ENCODE measurements at regions of chr6 and their contacts with region 1.

Region 1: GRCh38 chr6:79570129-79571029 is 33.1 kb upstream of the LCA5 start:
- DNase-seq: peak; percentile 76
- ATAC-seq: peak; percentile 86
- H3K4me3 ChIP-seq: peak overlapping the region; percentile 52
- H3K27ac ChIP-seq: peak overlapping the region; percentile 28
- H3K4me1 ChIP-seq: peaks cover 32% of the 10 kb centered on the region
- H3K27me3 ChIP-seq: no peaks in the 10 kb centered on the region
- CTCF ChIP-seq: peak; percentile 74

Region 2: DNA sequence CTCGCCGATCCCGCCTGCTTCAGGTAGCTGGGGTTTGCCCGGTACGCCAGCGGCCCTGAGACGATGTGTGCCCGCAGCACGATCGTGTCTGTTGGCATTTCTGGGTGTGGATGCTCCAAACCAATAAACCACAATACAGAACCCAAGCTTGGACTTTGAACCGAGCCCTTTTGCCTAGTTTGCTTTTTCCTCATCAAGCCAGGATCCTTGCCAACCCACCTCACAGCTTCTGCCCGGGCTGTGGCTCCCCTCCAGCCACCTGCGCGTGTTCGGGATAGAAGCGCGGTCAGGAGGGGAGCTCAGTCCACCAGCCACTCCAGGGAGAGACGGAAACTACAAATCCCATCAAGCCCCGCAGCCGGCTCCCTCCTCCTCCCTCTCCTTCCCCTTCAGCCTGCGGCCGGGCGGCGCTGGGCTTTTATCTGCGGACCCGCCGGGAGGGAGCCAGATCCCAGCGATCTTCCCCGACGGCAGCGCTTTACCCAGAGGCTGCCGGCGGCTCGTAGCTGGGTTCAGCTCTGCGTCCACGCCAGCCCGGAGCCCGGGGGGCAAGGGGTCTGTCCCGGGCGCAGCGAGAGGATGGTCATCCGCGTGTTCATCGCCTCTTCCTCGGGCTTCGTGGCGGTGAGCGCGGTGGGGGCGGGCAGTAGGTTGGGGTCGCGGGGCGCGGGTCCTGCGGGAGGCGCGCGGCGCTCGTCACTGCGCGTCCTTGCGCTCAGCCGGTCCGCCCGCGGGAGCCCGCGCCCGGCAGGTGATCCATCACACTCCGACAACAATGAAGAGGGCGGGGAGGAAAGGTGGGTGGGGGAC is 60.7 kb after region 1 on chr6 and contains the start of gene SH3BGRL2:
- CTCF ChIA-PET with region 1: interaction called, 6 read pairs
- POLR2A ChIA-PET with region 1: no interaction called
- intact Hi-C with region 1: loop called (anchors 2 kb)
- DNase-seq: peak; percentile 63
- ATAC-seq: peak; percentile 79
- H3K4me3 ChIP-seq: peak within 1 kb of the TSS; percentile 94
- H3K27ac ChIP-seq: no peak within 1 kb of the TSS
- H3K4me1 ChIP-seq: peaks cover 26% of the 10 kb centered on the region
- H3K27me3 ChIP-seq: no peaks in the 10 kb centered on the region
- CTCF ChIP-seq: no peak
- total RNA-seq, gene SH3BGRL2: 3.7 and 3.8 TPM in 2 replicates

Region 3: GRCh38 chr6:79672631-79673111 is 102.3 kb after region 1 on chr6:
- CTCF ChIA-PET with region 1: interaction called, 13 read pairs
- POLR2A ChIA-PET with region 1: no interaction called
- intact Hi-C with region 1: loop called (anchors 1 kb)
- DNase-seq: peak; percentile 65
- ATAC-seq: peak; percentile 41
- H3K4me3 ChIP-seq: no peak overlapping the region
- H3K27ac ChIP-seq: peak overlapping the region; percentile 70; the same call in 1 of the 2 replicates
- H3K4me1 ChIP-seq: peaks cover 23% of the 10 kb centered on the region
- H3K27me3 ChIP-seq: no peaks in the 10 kb centered on the region
- CTCF ChIP-seq: peak; percentile 81

Region 4: DNA sequence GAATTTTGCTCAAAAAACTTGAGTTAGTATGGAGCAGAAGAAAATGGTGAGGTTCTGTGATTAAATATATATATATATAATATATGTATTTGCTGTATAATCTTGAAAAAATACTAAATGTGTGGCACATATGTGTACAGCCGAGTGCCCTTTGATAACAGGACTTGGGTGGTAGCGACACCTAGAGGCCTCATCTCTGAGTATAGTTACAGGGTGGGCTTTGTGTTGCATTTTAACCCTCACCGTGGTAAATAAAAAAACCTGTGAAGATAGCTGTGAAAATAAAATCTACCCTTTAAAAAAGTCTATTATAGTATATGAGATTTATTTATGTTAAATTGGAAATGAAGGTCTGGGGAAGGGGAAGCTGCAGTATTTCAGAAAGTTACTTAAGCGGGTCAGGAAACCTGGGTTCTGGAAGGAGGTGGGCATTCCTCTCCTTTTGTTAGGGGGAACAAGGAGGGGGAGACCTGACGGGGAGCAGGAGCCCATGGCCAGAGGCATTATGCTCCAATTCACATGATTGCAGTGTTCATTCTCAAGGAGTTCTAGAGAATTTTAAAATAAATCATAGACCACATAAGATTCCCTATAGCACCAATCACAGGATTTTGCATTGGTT is 143.4 kb after region 1 on chr6:
- CTCF ChIA-PET with region 1: no interaction called
- POLR2A ChIA-PET with region 1: no interaction called
- intact Hi-C with region 1: loop called (anchors 1 kb)
- DNase-seq: peak; percentile 64
- ATAC-seq: peak; percentile 74; the same call in 1 of the 2 replicates
- H3K4me3 ChIP-seq: no peak overlapping the region
- H3K27ac ChIP-seq: no peak overlapping the region
- H3K4me1 ChIP-seq: no peaks in the 10 kb centered on the region
- H3K27me3 ChIP-seq: no peaks in the 10 kb centered on the region
- CTCF ChIP-seq: peak; percentile 66

Region 5: GRCh38 chr6:79813854-79814709 is 243.7 kb after region 1 on chr6:
- CTCF ChIA-PET with region 1: no interaction called
- POLR2A ChIA-PET with region 1: no interaction called
- intact Hi-C with region 1: loop called (anchors 5 kb)
- DNase-seq: peak; percentile 71
- ATAC-seq: peak; percentile 74
- H3K4me3 ChIP-seq: no peak overlapping the region
- H3K27ac ChIP-seq: no peak overlapping the region
- H3K4me1 ChIP-seq: no peaks in the 10 kb centered on the region
- H3K27me3 ChIP-seq: 0 out of 2 replicates have a peak, but pooled peaks cover 7% of the 10 kb centered on the region
- CTCF ChIP-seq: peak; percentile 72

Region 6: DNA sequence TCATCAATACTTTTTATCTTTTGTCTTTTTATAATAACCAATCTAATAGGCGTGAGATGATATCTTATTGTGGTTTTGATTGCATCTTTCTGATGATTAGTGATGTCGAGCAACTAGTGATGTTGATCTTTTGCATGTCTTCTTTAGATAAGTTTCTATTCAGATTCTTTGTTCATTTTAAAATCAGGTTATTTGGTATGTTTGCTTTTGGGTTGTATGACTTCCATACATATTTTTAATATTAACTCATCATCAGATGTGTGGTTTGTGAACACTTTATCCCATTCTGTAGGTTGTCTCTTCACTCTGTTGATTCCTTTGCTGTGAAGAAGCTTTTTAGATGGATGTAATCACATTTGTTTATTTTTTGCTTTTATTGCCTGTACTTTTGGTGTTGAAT is 831.9 kb after region 1 on chr6:
- CTCF ChIA-PET with region 1: no interaction called
- POLR2A ChIA-PET with region 1: no interaction called
- intact Hi-C with region 1: no loop called
- DNase-seq: peak; percentile 17
- ATAC-seq: no peak
- H3K4me3 ChIP-seq: no peak overlapping the region
- H3K27ac ChIP-seq: no peak overlapping the region
- H3K4me1 ChIP-seq: peaks cover 8% of the 10 kb centered on the region
- H3K27me3 ChIP-seq: no peaks in the 10 kb centered on the region
- CTCF ChIP-seq: no peak

Measured in PC-3 (cell line).